GM10248 (cell line): ENCODE measurements at regions of chr7 and their contacts with region 1.

Region 1: GRCh38 chr7:122572706-122573105 is 126.2 kb downstream of the RNF133 start:
- DNase-seq: no peak
- CTCF ChIP-seq: no peak

Region 2: DNA sequence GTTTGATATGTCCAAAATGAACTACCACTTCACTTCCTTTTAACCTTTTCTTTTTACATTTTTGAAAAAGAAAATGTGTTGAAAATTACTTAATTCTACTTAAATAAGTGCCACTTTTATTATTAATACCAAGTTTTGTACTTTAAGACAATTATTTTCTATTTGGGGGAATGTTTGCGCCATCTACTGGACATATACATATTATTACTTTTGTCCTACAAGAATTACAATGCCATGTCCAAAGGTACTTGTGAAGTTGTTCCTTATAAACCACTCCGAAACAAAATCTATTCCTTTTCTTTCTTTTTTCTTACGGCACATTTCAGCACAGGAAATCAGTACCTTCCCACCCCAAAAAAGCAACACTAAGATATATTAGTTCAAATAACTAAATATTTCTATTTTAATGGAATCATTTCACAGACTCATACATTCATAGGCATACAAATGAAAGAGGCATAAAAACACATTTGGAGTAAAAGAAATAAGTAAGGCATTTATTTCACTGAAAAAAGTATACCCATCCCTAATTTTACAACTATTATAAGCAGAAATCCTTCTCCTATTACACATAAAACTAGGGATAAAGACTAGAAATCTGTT is 43.7 kb before region 1 on chr7:
- CTCF ChIA-PET with region 1: no interaction called
- POLR2A ChIA-PET with region 1: no interaction called
- DNase-seq: peak; percentile 19
- CTCF ChIP-seq: peak; percentile 43

Region 3: GRCh38 chr7:122556873-122557542 is 15.7 kb before region 1 on chr7:
- CTCF ChIA-PET with region 1: interaction called, 13 read pairs
- POLR2A ChIA-PET with region 1: no interaction called
- DNase-seq: no peak
- CTCF ChIP-seq: no peak